Tibial artery (tissue), 4 donors: ENCODE measurements at regions of chr5 and their contacts with region 1.

Region 1: DNA sequence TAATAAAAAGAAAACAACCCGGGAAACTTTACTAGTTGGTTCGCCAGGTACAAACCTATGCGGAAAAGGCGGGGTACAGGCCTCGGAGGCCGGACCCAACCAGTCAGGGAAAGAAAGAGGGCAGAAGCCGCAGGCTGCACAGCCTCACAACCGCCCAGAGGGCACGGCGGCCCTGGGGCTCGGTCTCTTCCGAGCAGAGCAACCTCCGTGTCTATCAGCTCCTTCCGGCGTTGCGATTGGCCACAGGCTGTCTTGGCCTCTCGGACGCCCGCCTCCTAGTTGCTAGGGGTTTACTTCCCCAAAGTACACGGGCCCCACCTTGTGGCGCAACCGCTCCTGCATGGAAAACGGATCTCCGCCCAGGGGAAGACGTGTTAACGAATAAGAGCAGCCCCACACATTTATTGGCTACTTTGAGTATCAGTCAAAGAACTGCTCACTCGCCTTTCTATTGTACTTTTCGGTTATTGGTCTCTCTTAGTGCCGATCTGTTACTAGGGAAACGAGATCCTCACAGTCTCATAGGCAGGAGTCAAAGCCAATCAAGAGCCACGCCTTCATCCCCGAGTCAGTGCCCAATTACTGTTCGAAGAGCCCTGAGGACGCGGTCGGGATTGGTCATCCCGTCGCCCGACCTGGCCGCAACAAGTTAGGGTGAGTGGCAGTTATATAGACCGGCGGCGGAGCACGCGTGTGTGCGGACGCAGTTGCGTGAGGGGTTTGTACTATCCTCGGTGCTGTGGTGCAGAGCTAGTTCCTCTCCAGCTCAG is at the start of gene G3BP1:
- DNase-seq: peak; percentile 100
- H3K4me3 ChIP-seq: peak within 1 kb of the TSS; percentile 76 to 84
- H3K27ac ChIP-seq: peak within 1 kb of the TSS; percentile 97 to 98
- H3K4me1 ChIP-seq: peaks cover 6 to 43% (median 28%) of the 10 kb centered on the region in 4 donors
- H3K27me3 ChIP-seq: no peaks in the 10 kb centered on the region
- CTCF ChIP-seq: peak; percentile 1 to 40

Region 2: DNA sequence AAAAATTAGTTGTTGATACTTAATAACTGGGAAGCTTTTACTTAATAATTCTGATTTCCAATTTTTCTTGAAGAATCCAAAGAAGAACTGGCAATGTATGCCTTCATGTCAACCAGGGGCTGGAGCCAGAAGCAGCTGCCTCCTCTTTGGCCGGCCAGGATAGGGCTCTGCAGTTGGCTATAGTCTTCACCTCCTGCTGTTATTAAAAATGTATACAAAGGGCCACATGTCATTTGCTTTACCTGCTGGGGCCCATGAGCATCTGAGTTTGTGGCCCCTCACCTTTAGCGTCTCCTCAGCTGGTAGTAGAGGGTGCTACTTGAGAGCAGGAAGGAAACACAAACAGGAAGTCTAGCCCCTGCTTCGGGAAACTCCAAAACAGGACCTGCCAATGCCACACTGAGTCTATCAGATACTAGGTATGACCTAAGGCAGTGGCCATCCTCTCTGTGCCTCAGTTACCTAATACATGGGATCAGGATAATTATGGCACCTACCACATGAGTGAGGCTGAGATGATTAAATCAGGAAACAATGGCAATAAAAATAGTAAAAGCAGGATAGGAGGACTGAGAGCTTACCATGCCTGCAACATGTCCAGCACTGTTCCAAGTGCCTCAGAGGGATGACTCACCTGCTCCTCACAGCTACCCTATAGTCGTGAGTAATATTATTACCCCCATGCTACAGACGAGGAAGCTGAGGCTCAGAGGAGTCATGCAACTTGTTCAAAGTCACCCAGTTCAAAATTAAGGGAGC is 568.9 kb before region 1 on chr5:
- intact Hi-C with region 1: no loop called
- DNase-seq: no peak
- H3K4me3 ChIP-seq: no peak overlapping the region
- H3K27ac ChIP-seq: no peak overlapping the region
- H3K4me1 ChIP-seq: no peaks in the 10 kb centered on the region
- H3K27me3 ChIP-seq: no peaks in the 10 kb centered on the region
- CTCF ChIP-seq: no peak

Region 3: GRCh38 chr5:151758430-151759241 is 12.8 kb before region 1 on chr5 and contains the start of gene ATOX1:
- intact Hi-C with region 1: loop called (anchors 2 kb)
- DNase-seq: peak; percentile 91 to 96
- H3K4me3 ChIP-seq: peak within 1 kb of the TSS; percentile 92 to 95
- H3K27ac ChIP-seq: peak within 1 kb of the TSS; percentile 88 to 96
- H3K4me1 ChIP-seq: peaks cover 0 to 39% (median 24%) of the 10 kb centered on the region in 4 donors
- H3K27me3 ChIP-seq: no peaks in the 10 kb centered on the region
- CTCF ChIP-seq: peak; percentile 37 to 55